ENCODE measurements at regions of chrX and their contacts with region 1.

Region 1: GRCh38 chrX:15686818-15687685 is 22.4 kb upstream of the CLTRN start:
- DNase-seq: peak; percentile 29 to 81 (median 42)
- ATAC-seq: peak; percentile 96
- H3K4me3 ChIP-seq: no peak overlapping the region
- H3K4me3 Mint-ChIP-seq: peak overlapping the region; percentile 31
- H3K27ac ChIP-seq: no peak overlapping the region
- H3K27ac Mint-ChIP-seq: peak overlapping the region; percentile 24
- H3K4me1 ChIP-seq: peaks cover 8% of the 10 kb centered on the region
- H3K4me1 Mint-ChIP-seq: peaks cover 12% of the 10 kb centered on the region
- H3K27me3 ChIP-seq: no peaks in the 10 kb centered on the region
- H3K27me3 Mint-ChIP-seq: no peaks in the 10 kb centered on the region
- CTCF ChIP-seq: peak; percentile 61

Region 2: GRCh38 chrX:15464704-15465103 is 222.3 kb before region 1 on chrX:
- CTCF ChIA-PET with region 1: no interaction called
- POLR2A ChIA-PET with region 1: no interaction called
- intact Hi-C with region 1: no loop called
- DNase-seq: no peak
- ATAC-seq: no peak
- H3K4me3 ChIP-seq: no peak overlapping the region
- H3K4me3 Mint-ChIP-seq: no peak overlapping the region
- H3K27ac ChIP-seq: no peak overlapping the region
- H3K27ac Mint-ChIP-seq: no peak overlapping the region
- H3K4me1 ChIP-seq: no peaks in the 10 kb centered on the region
- H3K4me1 Mint-ChIP-seq: no peaks in the 10 kb centered on the region
- H3K27me3 ChIP-seq: no peaks in the 10 kb centered on the region
- H3K27me3 Mint-ChIP-seq: no peaks in the 10 kb centered on the region
- CTCF ChIP-seq: no peak

Region 3: DNA sequence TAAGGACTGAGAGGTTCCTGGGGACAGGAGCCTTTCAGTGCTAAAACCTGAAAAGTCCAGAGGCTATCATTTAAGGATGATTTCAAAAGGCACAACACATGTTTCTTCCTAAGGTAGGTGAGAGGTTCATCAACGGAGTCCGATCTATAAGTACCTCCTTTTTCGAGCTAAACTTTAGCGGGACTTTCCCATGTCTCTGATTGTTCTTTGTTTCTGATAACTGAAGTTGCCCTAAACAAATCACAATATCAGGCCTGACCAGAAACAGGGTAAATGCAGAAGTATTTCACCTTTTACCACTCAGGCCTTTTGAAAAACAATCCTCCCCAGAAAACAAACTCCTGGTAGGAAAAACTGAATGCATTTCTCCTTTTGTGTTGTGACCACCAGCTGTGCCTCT is 211.6 kb before region 1 on chrX:
- CTCF ChIA-PET with region 1: no interaction called
- POLR2A ChIA-PET with region 1: no interaction called
- intact Hi-C with region 1: no loop called
- DNase-seq: no peak
- ATAC-seq: no peak
- H3K4me3 ChIP-seq: no peak overlapping the region
- H3K4me3 Mint-ChIP-seq: no peak overlapping the region
- H3K27ac ChIP-seq: no peak overlapping the region
- H3K27ac Mint-ChIP-seq: no peak overlapping the region
- H3K4me1 ChIP-seq: no peaks in the 10 kb centered on the region
- H3K4me1 Mint-ChIP-seq: no peaks in the 10 kb centered on the region
- H3K27me3 ChIP-seq: no peaks in the 10 kb centered on the region
- H3K27me3 Mint-ChIP-seq: peaks cover 4% of the 10 kb centered on the region
- CTCF ChIP-seq: no peak

Region 4: GRCh38 chrX:15744181-15744867 is 57.3 kb after region 1 on chrX:
- CTCF ChIA-PET with region 1: no interaction called
- POLR2A ChIA-PET with region 1: no interaction called
- intact Hi-C with region 1: no loop called
- DNase-seq: no peak
- ATAC-seq: no peak
- H3K4me3 ChIP-seq: no peak overlapping the region
- H3K4me3 Mint-ChIP-seq: peak overlapping the region; percentile 4
- H3K27ac ChIP-seq: no peak overlapping the region
- H3K27ac Mint-ChIP-seq: peak overlapping the region; percentile 71
- H3K4me1 ChIP-seq: peaks cover 48% of the 10 kb centered on the region
- H3K4me1 Mint-ChIP-seq: peaks cover 86% of the 10 kb centered on the region
- H3K27me3 ChIP-seq: no peaks in the 10 kb centered on the region
- H3K27me3 Mint-ChIP-seq: no peaks in the 10 kb centered on the region
- CTCF ChIP-seq: no peak

Region 5: DNA sequence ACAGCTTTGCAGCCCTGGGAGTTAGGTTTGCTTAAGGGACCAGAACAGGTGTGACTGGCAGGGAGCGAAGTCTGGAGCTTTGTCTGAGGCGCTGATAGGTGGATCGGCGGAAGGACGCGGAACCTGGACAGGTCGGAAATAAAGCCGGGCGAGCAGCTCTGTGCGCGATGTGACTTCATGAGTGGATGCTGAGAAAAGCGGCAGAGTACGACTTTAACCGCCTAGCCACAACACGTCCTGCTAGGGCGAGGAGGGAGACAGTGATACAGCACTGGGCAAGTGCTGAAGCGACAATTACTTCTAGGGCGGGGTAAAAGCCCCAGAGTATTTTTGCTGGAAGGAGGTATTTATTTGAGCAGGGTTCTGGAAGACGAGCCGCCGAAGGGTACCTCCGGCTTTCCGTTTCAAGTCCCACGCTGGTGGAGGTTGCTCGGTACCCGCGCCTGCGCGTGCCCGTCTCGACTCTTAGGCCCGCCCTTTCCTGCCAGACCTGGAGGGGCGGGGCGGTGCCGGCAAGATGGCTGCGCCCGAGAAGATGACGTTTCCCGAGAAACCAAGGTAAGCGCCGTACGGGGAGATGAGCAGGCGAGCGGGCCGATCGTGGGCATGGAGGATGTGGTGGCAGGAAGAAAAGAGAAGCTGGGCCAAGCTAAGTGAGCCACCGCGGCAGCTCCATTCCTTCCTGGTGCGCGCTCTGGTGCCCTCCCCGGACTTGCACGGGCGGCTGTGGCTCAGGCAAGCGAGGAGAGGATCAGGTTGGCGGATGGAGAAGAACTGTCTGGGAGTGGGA is 103.1 kb after region 1 on chrX and contains the start of gene ZRSR2:
- CTCF ChIA-PET with region 1: no interaction called
- POLR2A ChIA-PET with region 1: no interaction called
- intact Hi-C with region 1: loop called in 1 of 2 experiments (anchors 10 kb)
- DNase-seq: peak; percentile 72 to 94 (median 86)
- ATAC-seq: peak; percentile 90
- H3K4me3 ChIP-seq: peak within 1 kb of the TSS; percentile 86
- H3K4me3 Mint-ChIP-seq: no peak within 1 kb of the TSS
- H3K27ac ChIP-seq: peak within 1 kb of the TSS; percentile 87 to 92
- H3K27ac Mint-ChIP-seq: no peak within 1 kb of the TSS
- H3K4me1 ChIP-seq: peaks cover 27% of the 10 kb centered on the region
- H3K4me1 Mint-ChIP-seq: peaks cover 13% of the 10 kb centered on the region
- H3K27me3 ChIP-seq: no peaks in the 10 kb centered on the region
- H3K27me3 Mint-ChIP-seq: no peaks in the 10 kb centered on the region
- CTCF ChIP-seq: no peak
- total RNA-seq, gene ZRSR2: 18.4 to 21.1 TPM

Region 6: DNA sequence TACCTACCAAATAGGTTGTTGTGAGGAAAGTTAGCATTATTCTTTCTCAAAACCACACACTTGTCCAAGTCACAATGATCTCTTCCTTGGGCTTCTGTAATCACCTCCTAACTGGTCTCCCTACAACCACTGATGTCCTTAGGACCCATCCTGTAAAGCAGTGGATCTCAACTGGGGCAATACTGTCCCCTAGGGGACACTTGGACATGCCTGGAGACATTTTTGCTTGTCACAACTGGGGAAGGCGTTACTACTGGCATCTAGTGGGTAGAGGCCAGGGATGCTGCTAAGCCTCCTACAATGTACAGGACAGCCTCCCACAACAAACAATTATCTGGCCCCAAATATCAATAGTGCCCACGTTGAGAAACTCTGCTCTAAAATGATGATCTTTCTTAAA is 286.2 kb after region 1 on chrX:
- CTCF ChIA-PET with region 1: no interaction called
- POLR2A ChIA-PET with region 1: no interaction called
- intact Hi-C with region 1: loop called in 1 of 2 experiments (anchors 5 kb)
- DNase-seq: peak in 5 of 14 experiments; percentile 1 to 35 (median 25)
- ATAC-seq: peak; percentile 44
- H3K4me3 ChIP-seq: no peak overlapping the region
- H3K4me3 Mint-ChIP-seq: no peak overlapping the region
- H3K27ac ChIP-seq: no peak overlapping the region
- H3K27ac Mint-ChIP-seq: no peak overlapping the region
- H3K4me1 ChIP-seq: no peaks in the 10 kb centered on the region
- H3K4me1 Mint-ChIP-seq: no peaks in the 10 kb centered on the region
- H3K27me3 ChIP-seq: no peaks in the 10 kb centered on the region
- H3K27me3 Mint-ChIP-seq: no peaks in the 10 kb centered on the region
- CTCF ChIP-seq: no peak

Region 7: GRCh38 chrX:16445166-16445752 is 758.2 kb after region 1 on chrX:
- CTCF ChIA-PET with region 1: no interaction called
- POLR2A ChIA-PET with region 1: no interaction called
- intact Hi-C with region 1: loop called in 1 of 2 experiments (anchors 5 kb)
- DNase-seq: peak; percentile 1 to 61 (median 22)
- ATAC-seq: peak; percentile 55
- H3K4me3 ChIP-seq: no peak overlapping the region
- H3K4me3 Mint-ChIP-seq: no peak overlapping the region
- H3K27ac ChIP-seq: no peak overlapping the region
- H3K27ac Mint-ChIP-seq: no peak overlapping the region
- H3K4me1 ChIP-seq: peaks cover 3% of the 10 kb centered on the region
- H3K4me1 Mint-ChIP-seq: peaks cover 15% of the 10 kb centered on the region
- H3K27me3 ChIP-seq: no peaks in the 10 kb centered on the region
- H3K27me3 Mint-ChIP-seq: no peaks in the 10 kb centered on the region
- CTCF ChIP-seq: peak; percentile 65

Measured in CD4-positive, alpha-beta T cell (primary cell).